ENCODE measurements at regions of chr15 and their contacts with region 1.

Region 1: DNA sequence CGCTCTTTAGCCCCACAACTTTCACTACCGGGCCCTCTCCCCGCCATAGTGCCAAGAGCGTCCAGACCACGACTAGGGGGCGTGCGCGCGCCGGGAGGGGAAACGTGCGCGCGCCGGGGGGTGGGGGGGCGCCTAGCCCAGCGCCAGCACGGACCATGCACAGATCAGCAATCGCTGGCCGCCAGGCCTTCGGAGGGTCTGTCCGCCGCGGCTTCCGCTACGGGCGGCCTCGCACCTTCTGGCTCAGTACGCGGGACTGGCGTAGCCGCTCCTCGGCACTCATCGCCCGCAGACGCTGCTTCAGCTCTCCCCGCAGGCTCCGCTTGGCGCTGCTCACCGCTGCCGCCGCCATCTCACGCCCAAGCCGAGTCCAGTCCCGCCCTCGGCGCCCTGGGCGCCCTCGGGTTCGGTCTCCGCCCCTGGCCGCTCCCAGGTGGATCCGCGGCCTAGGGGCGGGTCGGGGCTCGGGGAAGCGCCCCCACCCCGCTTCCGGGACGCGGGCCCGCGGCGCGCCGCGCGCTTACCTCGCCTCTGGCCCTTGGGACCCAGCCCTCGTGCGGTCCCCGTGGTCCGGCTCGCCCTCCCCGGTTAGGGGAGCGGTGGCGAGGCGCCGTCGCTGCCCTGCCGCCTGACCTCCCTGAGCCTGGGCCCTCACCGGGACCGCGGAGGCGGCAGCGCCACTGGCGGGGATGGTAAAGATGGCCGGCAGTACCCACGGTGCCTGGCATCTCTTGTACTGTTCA is at the start of gene MTHFS:
- DNase-seq: peak; percentile 22 to 78
- H3K4me3 ChIP-seq: peak within 1 kb of the TSS; percentile 74 to 83
- H3K27ac ChIP-seq: peak within 1 kb of the TSS; percentile 96 to 97
- H3K4me1 ChIP-seq: no peaks in the 10 kb centered on the region
- H3K27me3 ChIP-seq: no peaks in the 10 kb centered on the region
- CTCF ChIP-seq: peak; percentile 29 to 69 (median 66)
- total RNA-seq, gene MTHFS: 0.75 TPM

Region 2: DNA sequence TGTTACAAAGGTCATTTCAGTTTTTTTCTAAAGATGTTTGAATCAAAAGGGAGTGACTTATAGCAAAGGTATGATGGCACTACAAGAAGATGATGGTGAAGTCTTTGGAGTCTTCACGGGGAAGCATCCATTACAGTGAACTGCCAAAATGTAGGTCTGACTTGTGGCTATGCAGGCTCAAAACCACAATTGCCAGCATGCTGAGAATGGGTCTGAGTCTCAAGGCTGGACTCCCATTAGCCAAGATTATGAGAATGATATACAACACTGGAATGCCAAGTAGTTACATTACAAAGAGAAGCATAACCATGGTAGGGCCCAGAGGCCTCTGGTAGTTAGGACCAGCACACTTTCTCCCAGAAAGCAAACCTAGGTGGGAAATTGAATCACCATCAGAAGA is 194.2 kb before region 1 on chr15:
- intact Hi-C with region 1: no loop called
- DNase-seq: no peak
- H3K4me3 ChIP-seq: no peak overlapping the region
- H3K27ac ChIP-seq: no peak overlapping the region
- H3K4me1 ChIP-seq: no peaks in the 10 kb centered on the region
- H3K27me3 ChIP-seq: no peaks in the 10 kb centered on the region
- CTCF ChIP-seq: no peak

Region 3: GRCh38 chr15:79858469-79858868 is 38.3 kb before region 1 on chr15:
- intact Hi-C with region 1: no loop called
- DNase-seq: no peak
- H3K4me3 ChIP-seq: no peak overlapping the region
- H3K27ac ChIP-seq: no peak overlapping the region
- H3K4me1 ChIP-seq: no peaks in the 10 kb centered on the region
- H3K27me3 ChIP-seq: no peaks in the 10 kb centered on the region
- CTCF ChIP-seq: no peak

Region 4: DNA sequence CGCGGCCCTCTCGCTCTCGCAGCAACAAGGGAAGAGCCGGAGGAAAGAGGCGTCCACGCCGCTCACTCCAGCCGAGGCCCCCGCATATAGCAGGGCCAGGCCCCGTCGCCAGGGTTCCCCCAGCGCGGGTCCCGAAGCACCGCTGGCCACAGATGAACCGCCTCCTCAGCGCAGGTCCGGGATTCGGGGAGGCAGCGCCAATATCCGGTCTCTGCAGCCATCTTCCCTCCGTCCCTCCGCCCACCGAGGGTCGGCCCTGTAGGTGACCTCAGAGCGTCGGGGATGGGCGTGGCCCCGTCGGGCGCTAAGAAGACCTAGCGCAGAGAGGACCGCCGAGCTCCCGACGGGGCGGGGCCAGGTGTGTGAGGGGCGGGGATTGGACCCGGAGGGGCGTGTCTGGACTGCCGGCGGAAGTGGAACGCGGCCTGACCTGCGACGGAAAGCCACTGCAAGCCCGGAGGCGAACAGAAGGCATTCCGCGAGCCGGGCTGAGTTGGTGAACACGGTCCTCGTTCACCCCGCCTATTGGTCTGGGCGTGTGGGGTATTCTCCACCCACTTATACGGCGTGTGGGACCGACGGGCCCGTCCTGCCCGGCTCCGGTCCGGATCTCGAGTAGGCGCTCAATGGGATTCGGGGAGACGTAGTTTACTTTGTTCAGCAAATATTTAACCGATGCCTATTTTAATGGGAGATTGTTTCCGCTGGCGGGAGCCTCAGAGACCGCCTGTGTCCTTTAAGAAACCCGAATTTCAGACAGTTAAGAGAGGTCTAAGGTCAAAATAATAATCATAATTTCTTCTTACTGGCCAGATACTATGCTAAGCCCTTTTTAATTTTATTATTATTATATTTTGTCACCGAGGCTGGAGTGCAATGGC is 26.9 kb after region 1 on chr15:
- intact Hi-C with region 1: loop called (anchors 1 kb)
- DNase-seq: peak; percentile 82 to 96
- H3K4me3 ChIP-seq: peak overlapping the region; percentile 79 to 86
- H3K27ac ChIP-seq: peak overlapping the region; percentile 95 to 96
- H3K4me1 ChIP-seq: peaks cover 5 to 6% of the 10 kb centered on the region in 2 donors
- H3K27me3 ChIP-seq: no peaks in the 10 kb centered on the region
- CTCF ChIP-seq: no peak

Region 5: GRCh38 chr15:79989682-79990081 is 92.9 kb after region 1 on chr15:
- intact Hi-C with region 1: loop called (anchors 2 kb)
- DNase-seq: no peak
- H3K4me3 ChIP-seq: no peak overlapping the region
- H3K27ac ChIP-seq: no peak overlapping the region
- H3K4me1 ChIP-seq: no peaks in the 10 kb centered on the region
- H3K27me3 ChIP-seq: no peaks in the 10 kb centered on the region
- CTCF ChIP-seq: no peak

Region 6: DNA sequence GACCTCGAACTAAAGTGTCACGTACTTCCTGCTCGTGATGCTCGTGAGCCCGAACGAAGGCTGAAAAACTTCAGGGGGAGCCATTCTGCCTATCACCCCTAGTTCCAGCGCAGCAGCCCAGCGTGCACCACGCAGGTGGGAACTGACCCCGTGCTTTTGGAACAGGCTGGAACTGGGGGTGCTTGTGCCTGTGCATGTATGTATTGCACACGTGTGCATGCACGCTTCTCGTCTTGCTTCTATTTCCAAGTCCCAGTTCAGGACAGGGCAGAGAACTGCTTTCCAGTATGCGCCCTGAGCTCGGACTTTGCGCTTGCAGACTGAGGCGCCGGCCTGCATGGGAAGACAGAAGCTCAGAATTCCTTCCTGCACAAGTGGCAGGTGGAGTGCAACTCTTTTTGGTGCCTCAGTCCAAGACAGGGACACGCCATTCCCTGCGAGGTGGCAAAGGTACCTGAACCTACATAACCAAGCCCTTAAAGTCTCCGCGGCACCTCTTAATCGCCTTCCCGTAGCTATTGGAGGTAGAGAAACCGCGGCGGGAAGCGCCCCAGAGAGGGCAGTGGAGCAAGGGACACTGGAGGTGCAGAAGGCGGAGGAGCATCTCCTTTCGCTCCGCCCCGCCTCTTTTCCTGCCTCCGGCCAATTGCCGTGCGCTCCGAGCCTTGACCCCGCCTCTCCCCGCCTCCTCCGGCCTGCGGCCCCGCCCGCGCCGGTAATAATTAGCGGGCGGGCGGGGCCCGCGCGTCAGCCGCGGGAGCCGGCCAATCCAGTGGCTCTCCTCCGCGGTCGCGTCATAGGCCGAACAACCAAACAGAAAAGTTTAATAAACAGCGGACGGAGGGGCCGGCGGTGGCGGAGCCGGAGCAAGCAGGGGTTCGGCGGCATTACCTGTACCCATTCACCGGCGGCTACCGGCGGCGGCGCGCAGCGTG is 162.3 kb after region 1 on chr15 and contains the start of gene ZFAND6:
- intact Hi-C with region 1: loop called (anchors 5 kb)
- DNase-seq: peak; percentile 78 to 97
- H3K4me3 ChIP-seq: peak within 1 kb of the TSS; percentile 87 to 96
- H3K27ac ChIP-seq: peak within 1 kb of the TSS; percentile 77 to 94
- H3K4me1 ChIP-seq: peaks cover 0 to 22% of the 10 kb centered on the region in 2 donors
- H3K27me3 ChIP-seq: no peaks in the 10 kb centered on the region
- CTCF ChIP-seq: peak in 1 of 3 experiments; percentile 6
- total RNA-seq, gene ZFAND6: 49.6 TPM

Region 7: GRCh38 chr15:80264031-80264430 is 367.2 kb after region 1 on chr15:
- intact Hi-C with region 1: no loop called
- DNase-seq: no peak
- H3K4me3 ChIP-seq: no peak overlapping the region
- H3K27ac ChIP-seq: no peak overlapping the region
- H3K4me1 ChIP-seq: no peaks in the 10 kb centered on the region
- H3K27me3 ChIP-seq: no peaks in the 10 kb centered on the region
- CTCF ChIP-seq: no peak

Measured in ascending aorta (tissue), 2 donors.